ENCODE measurements at regions of chr2 and their contacts with region 1.

Region 1: GRCh38 chr2:238346544-238346943 is 26.2 kb downstream of the TRAF3IP1 start:
- DNase-seq: no peak
- ATAC-seq: no peak
- H3K4me3 ChIP-seq: no peak overlapping the region
- H3K27ac ChIP-seq: no peak overlapping the region
- H3K4me1 ChIP-seq: no peaks in the 10 kb centered on the region
- CTCF ChIP-seq: no peak
- EP300 ChIP-seq: no peak
- POLR2A ChIP-seq: no peak
- RAD21 ChIP-seq: no peak

Region 2: GRCh38 chr2:238239872-238240751 is 106.4 kb before region 1 on chr2 and contains the start of gene HES6:
- CTCF ChIA-PET with region 1: no interaction called
- POLR2A ChIA-PET with region 1: no interaction called
- DNase-seq: peak; percentile 83 to 88
- ATAC-seq: peak; percentile 80 to 90
- H3K4me3 ChIP-seq: peak within 1 kb of the TSS; percentile 81
- H3K27ac ChIP-seq: peak within 1 kb of the TSS; percentile 77 to 90
- H3K4me1 ChIP-seq: peaks cover 9% of the 10 kb centered on the region; the same call in 1 of the 3 replicates
- CTCF ChIP-seq: no peak
- EP300 ChIP-seq: no peak
- POLR2A ChIP-seq: peak; percentile 99
- RAD21 ChIP-seq: no peak
- polyA plus RNA-seq, gene HES6: 5.2 and 5.4 TPM in 2 replicates

Region 3: GRCh38 chr2:238362626-238363025 is 16.1 kb after region 1 on chr2:
- CTCF ChIA-PET with region 1: interaction called, 11 read pairs
- POLR2A ChIA-PET with region 1: no interaction called
- DNase-seq: no peak
- ATAC-seq: no peak
- H3K4me3 ChIP-seq: no peak overlapping the region
- H3K27ac ChIP-seq: no peak overlapping the region
- H3K4me1 ChIP-seq: peaks cover under 1% of the 10 kb centered on the region; the same call in 2 of the 3 replicates
- CTCF ChIP-seq: no peak
- EP300 ChIP-seq: no peak
- POLR2A ChIP-seq: no peak
- RAD21 ChIP-seq: no peak

Region 4: DNA sequence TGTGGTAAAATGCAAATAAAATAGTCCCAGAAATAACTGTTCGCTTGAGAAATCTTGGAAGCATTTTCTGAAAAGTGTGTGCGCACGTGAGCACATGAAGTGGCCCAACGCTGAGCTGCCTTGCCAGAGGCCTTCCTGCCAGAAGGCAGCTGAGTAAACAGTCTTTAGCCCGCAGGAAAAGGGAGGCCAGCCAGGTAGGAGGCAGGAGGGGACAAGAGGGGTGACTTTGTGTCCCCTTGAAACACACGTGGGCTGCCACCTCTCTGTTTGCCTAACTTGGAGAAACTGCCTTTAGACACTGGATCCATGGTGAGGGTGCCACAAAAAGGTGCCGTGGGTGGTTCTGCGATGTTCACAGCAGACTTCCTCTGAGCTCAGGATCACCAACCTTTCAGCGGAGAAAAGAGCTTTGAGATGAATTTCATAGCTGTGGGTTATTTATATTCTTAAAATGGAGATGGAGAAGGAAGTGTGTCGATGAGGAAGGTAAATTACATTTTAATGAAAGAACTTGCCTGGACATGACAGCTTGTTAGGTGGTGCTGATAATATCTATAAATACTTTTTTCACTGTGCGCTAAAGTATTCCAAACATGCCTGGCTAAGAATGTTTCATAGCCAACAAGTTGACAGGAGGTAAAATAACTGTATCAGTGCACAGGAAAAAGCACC is 43.5 kb after region 1 on chr2:
- CTCF ChIA-PET with region 1: no interaction called
- POLR2A ChIA-PET with region 1: no interaction called
- DNase-seq: no peak
- ATAC-seq: no peak
- H3K4me3 ChIP-seq: no peak overlapping the region
- H3K27ac ChIP-seq: 0 out of 6 replicates have a peak overlapping the region, but pooled peaks of 1 of the 2 experiments have one; percentile 38
- H3K4me1 ChIP-seq: no peaks in the 10 kb centered on the region
- CTCF ChIP-seq: no peak
- EP300 ChIP-seq: no peak
- POLR2A ChIP-seq: no peak
- RAD21 ChIP-seq: no peak